ENCODE measurements at regions of chr9 and their contacts with region 1.

Region 1: DNA sequence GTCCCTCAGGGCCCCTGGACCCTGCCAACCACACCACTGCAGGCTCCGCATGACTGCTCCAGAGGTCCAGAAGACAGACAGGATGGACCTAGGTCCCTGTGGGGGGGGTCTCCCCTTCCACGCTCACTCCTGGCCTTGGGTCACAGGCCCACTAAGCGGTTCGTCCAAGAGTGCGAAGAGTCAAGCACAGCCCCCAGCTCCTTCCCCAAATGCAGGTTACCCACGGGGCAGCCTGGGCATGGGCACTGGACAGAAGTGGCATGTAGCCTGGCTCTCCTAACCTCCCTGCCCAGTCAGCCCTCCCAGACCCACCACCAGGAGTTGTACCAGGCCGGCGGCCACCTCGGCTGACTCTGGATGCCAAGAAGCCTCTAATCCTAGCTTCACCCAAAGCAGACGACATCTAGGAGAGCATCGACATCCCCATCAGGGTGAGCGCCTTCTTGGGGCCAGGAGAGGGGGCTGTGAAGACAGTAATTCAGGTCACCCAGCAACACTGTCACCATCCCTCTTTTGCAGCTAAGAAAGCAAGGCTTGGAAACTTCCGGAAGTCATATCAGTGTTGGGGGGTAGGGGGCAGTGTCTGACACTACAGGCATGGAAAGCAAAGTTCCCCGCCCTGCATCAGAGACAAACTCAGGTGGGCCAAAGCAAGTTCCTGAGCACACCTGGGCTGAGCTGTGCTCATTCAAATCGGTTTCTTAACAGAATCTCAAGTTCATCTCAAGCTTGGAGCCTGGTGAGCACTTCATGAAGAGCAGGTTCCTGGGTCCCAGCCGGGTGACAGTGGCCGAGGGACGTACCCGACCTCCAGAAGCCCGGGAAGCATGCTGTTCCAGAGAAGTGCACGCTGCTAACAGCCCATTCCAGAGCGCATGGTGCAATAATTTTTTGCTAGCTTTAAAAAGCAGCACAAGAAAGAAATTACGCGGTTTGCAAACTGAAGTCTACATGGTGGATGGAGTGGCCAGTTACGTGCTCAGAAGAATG is 68.7 kb downstream of the SEMA4D start:
- DNase-seq: peak; percentile 44 to 87 (median 73)
- ATAC-seq: peak; percentile 65
- H3K4me3 ChIP-seq: no peak overlapping the region
- H3K4me3 Mint-ChIP-seq: peak overlapping the region; percentile 45
- H3K27ac ChIP-seq: peak overlapping the region in 1 of 2 experiments; percentile 66
- H3K27ac Mint-ChIP-seq: peak overlapping the region; percentile 98
- H3K4me1 ChIP-seq: peaks cover 99% of the 10 kb centered on the region
- H3K4me1 Mint-ChIP-seq: peaks cover 95% of the 10 kb centered on the region
- H3K27me3 ChIP-seq: no peaks in the 10 kb centered on the region
- H3K27me3 Mint-ChIP-seq: no peaks in the 10 kb centered on the region
- CTCF ChIP-seq: peak; percentile 75

Region 2: GRCh38 chr9:89442981-89443814 is 14.0 kb after region 1 on chr9:
- CTCF ChIA-PET with region 1: interaction called, 47 read pairs
- POLR2A ChIA-PET with region 1: interaction called, 8 read pairs
- intact Hi-C with region 1: no loop called
- DNase-seq: no peak
- ATAC-seq: no peak
- H3K4me3 ChIP-seq: peak overlapping the region in 1 of 2 experiments; percentile 10
- H3K4me3 Mint-ChIP-seq: no peak overlapping the region
- H3K27ac ChIP-seq: peak overlapping the region; percentile 46 to 50
- H3K27ac Mint-ChIP-seq: peak overlapping the region; percentile 97
- H3K4me1 ChIP-seq: peaks cover 97% of the 10 kb centered on the region
- H3K4me1 Mint-ChIP-seq: peaks cover 89% of the 10 kb centered on the region
- H3K27me3 ChIP-seq: no peaks in the 10 kb centered on the region
- H3K27me3 Mint-ChIP-seq: no peaks in the 10 kb centered on the region
- CTCF ChIP-seq: no peak

Region 3: DNA sequence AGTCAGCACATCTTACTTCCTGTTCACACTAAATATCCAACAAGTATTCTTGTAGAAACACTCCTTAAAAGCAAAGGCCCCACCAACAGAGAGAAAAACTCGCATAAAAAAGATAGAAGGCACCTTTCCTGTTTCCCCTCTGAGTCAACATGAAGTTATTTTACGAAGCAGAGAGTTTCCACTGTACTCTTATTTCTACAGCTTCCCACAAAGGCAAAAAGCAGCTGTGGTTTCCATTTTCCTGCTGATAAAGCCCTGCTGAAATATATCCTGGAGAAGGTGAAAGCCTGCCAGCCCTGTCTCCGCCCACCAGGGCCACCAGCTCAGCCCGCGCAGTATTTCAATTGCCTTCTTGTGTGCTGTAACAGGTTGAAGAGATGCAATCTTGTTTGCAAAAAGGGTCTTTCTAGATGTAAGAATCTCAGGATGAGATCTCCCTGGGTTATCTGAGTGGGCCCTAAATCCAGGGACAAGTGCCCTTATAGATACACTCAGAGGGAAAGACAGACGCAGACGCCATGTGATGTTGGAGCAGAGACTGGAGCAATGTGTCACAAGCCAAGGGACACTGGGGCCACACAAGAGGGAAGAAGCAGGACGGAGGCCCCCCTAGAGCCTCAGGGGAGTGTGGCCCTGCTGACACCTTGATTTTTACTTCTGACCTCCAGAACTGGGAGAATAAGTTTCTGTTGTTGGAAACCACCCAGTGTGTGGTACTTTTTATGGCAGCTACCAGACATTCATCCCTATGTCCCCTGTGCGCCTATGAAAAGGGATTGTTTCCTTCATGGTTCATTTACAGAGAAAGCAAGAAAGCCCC is 48.8 kb after region 1 on chr9:
- CTCF ChIA-PET with region 1: interaction called, 16 read pairs
- POLR2A ChIA-PET with region 1: interaction called, 5 read pairs
- intact Hi-C with region 1: loop called in 1 of 2 experiments (anchors 5 kb)
- DNase-seq: peak in 6 of 9 experiments; percentile 36 to 72 (median 66)
- ATAC-seq: peak; percentile 35
- H3K4me3 ChIP-seq: peak overlapping the region; percentile 44 to 50
- H3K4me3 Mint-ChIP-seq: peak overlapping the region; percentile 91
- H3K27ac ChIP-seq: peak overlapping the region; percentile 26 to 65
- H3K27ac Mint-ChIP-seq: peak overlapping the region; percentile 99
- H3K4me1 ChIP-seq: peaks cover 82% of the 10 kb centered on the region
- H3K4me1 Mint-ChIP-seq: peaks cover 90% of the 10 kb centered on the region
- H3K27me3 ChIP-seq: no peaks in the 10 kb centered on the region
- H3K27me3 Mint-ChIP-seq: no peaks in the 10 kb centered on the region
- CTCF ChIP-seq: no peak

Region 4: DNA sequence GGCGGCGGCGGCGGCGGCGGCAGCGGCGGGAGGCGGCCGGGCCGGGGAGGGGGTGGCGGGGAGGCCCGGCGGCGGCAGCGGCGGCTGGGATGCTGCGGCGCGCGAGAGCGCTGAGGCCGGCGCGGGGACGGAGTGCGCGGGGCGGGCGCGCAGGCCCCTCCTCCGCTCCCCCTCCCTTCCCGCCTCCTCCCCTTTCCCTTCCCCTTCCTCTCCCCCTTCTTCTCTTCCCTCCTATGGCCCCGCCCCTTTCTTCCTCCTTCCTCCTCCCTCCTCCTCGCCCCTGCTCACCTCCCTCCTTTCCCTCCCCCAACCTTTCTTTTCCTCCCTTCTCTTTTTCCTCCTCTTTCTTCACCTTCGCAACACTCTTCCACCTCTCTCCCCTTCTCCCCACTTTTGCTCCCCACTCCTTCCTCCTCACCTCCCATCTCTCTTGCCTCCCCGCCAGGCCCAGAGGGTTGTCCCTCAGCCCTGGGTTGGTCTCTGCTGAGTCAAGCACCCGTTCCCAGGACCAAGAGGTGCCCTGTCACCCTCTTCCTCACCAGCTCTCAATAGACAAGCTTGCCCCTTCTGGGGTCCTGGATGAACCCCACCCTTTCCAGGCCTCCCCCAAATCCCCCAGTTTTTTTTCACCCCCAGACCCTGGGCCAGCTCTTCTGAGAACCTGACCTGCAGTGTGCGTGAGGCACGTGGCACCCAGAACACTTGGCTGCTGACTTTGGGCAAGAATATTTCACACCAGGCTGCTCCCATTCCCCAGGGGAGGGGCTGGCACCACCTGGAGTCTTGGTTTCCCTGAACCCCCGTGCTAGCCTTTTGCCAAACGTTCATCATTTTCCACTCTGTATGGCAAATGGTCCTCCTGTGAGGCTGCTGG is 69.0 kb after region 1 on chr9 and contains the start of gene SEMA4D:
- CTCF ChIA-PET with region 1: interaction called, 9 read pairs
- POLR2A ChIA-PET with region 1: interaction called, 3 read pairs
- intact Hi-C with region 1: loop called in 1 of 2 experiments (anchors 5 kb)
- DNase-seq: peak in 7 of 9 experiments; percentile 40 to 86 (median 58)
- ATAC-seq: no peak
- H3K4me3 ChIP-seq: peak within 1 kb of the TSS; percentile 78 to 82
- H3K4me3 Mint-ChIP-seq: peak within 1 kb of the TSS; percentile 94
- H3K27ac ChIP-seq: peak within 1 kb of the TSS; percentile 77
- H3K27ac Mint-ChIP-seq: peak within 1 kb of the TSS; percentile 99
- H3K4me1 ChIP-seq: peaks cover 84% of the 10 kb centered on the region
- H3K4me1 Mint-ChIP-seq: peaks cover 88% of the 10 kb centered on the region
- H3K27me3 ChIP-seq: no peaks in the 10 kb centered on the region
- H3K27me3 Mint-ChIP-seq: no peaks in the 10 kb centered on the region
- CTCF ChIP-seq: no peak
- total RNA-seq, gene SEMA4D: 286 to 305 TPM

Region 5: DNA sequence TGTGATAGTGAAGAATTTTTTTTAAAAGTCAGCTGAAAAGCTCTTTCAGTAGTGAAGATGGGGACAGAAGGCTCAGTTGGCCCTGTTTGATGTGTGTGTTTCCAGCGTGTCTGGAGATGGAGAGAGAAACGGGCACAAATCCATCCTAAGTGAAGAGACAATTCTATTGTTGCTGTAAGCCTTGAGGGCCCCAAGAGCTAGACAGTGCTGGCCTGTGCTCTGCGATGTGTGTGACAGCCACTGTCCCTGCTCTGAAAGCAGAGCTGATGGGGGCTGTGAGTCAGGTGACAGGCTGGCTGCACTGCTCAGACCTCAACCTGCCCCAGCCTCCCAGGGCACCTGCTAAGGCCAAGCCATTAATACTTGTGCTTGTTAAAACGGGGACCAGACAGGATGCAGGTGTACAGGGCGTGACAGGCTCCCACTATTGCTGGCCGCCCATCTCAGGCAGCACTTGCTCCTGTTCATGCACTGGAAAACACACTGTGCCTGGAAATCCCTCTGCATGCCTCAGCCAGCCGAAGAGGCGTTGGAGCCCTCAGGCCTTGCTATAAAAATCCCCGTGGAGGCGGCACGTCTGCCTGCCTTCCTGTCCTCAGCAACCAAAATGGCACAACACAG is 113.3 kb after region 1 on chr9:
- CTCF ChIA-PET with region 1: interaction called, 128 read pairs
- POLR2A ChIA-PET with region 1: no interaction called
- intact Hi-C with region 1: no loop called
- DNase-seq: peak in 1 of 9 experiments; percentile 47
- ATAC-seq: no peak
- H3K4me3 ChIP-seq: no peak overlapping the region
- H3K4me3 Mint-ChIP-seq: no peak overlapping the region
- H3K27ac ChIP-seq: no peak overlapping the region
- H3K27ac Mint-ChIP-seq: peak overlapping the region; percentile 22
- H3K4me1 ChIP-seq: peaks cover 57% of the 10 kb centered on the region
- H3K4me1 Mint-ChIP-seq: peaks cover 68% of the 10 kb centered on the region
- H3K27me3 ChIP-seq: no peaks in the 10 kb centered on the region
- H3K27me3 Mint-ChIP-seq: no peaks in the 10 kb centered on the region
- CTCF ChIP-seq: no peak

Region 6: DNA sequence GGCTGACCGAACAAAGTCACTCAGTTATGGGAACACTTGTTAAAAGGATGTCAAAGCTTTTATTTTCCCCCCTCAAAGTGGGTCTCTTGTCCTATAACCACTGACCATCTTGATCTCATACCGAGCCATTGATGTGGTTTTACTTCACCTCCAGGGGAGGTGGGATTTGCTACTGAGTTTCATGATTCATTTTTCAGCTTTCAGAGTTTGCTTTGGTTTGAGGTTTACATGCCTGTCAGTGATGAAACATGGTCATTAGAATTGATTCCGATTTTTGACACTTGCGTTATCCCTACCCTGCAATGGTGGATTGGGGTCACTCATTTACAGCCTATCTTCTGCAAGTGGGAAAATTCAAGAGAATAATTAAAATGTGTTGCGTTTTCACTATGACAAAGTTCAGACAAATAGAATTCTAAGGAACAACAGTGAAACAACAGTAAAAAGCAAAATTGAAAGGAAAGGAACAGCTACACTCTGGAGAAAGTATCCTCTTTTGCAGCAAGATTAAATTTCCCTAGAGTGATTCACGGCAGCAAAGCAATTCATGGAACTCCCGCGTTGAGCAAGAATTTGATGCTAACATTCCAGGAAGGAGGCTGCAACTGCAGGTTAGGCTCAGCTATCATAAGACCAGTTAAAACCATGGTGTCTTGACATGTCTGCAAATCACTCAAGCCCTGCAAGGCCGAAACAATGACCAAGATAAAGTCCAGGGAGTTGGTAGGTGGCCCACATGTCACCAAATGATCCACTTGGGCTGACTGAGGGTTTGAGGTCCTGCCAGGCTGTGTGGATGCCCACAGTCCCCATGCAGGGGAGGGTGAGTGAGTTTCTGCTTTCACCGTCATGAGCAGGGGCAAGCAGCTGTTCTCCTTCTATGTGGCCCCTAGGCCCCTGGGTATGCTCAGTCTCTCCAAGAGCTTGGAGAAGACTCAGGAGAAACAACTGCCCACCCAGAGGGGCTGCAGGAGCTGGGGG is 185.0 kb after region 1 on chr9:
- CTCF ChIA-PET with region 1: no interaction called
- POLR2A ChIA-PET with region 1: no interaction called
- intact Hi-C with region 1: no loop called
- DNase-seq: no peak
- ATAC-seq: no peak
- H3K4me3 ChIP-seq: no peak overlapping the region
- H3K4me3 Mint-ChIP-seq: no peak overlapping the region
- H3K27ac ChIP-seq: no peak overlapping the region
- H3K27ac Mint-ChIP-seq: no peak overlapping the region
- H3K4me1 ChIP-seq: no peaks in the 10 kb centered on the region
- H3K4me1 Mint-ChIP-seq: no peaks in the 10 kb centered on the region
- H3K27me3 ChIP-seq: no peaks in the 10 kb centered on the region
- H3K27me3 Mint-ChIP-seq: peaks cover 3% of the 10 kb centered on the region
- CTCF ChIP-seq: no peak